ENCODE measurements at regions of chr2 and their contacts with region 1.

Region 1: GRCh38 chr2:219689676-219690628 is 62.5 kb downstream of the SLC4A3 start:
- DNase-seq: peak in 1 of 2 donors; percentile 30
- H3K4me3 ChIP-seq: peak overlapping the region in 1 of 2 donors; percentile 18
- H3K27ac ChIP-seq: peak overlapping the region; percentile 68 to 86
- H3K4me1 ChIP-seq: peaks cover 0 to 38% (median 25%) of the 10 kb centered on the region in 4 donors
- H3K27me3 ChIP-seq: no peaks in the 10 kb centered on the region
- CTCF ChIP-seq: peak; percentile 71 to 73

Region 2: DNA sequence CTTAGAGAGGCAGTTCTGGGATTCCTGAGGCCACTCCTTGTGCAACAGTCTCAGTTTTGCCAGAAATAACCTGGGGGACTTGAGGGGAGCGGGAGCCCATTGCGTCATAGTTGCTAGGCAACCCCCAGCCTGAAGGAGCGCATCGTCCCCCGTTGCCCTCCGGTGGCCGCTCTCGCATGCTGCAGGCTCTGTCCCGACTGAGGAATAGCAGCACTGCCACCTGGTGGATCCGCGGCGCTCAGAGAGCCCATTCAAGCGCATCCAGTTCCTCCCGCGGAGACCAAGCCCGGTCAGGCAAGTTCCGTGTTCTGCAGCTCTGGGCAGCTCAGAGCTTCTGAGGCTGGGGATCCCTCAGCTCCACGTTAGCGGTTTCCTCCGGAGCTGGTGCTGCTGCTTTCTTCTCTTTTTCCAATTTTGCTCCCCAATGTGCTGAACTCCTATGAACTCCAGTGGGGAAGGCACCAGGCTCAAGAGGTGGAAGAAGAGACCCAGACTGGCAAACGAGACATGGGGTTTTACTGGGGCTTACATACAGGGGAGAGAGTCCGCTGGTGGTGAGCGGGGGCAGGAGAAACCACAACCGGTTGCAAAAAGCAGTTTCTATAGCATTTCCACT is 47.4 kb before region 1 on chr2:
- intact Hi-C with region 1: loop called (anchors 5 kb)
- DNase-seq: peak; percentile 98
- H3K4me3 ChIP-seq: no peak overlapping the region
- H3K27ac ChIP-seq: no peak overlapping the region
- H3K4me1 ChIP-seq: peaks cover 0 to 23% (median 15%) of the 10 kb centered on the region in 4 donors
- H3K27me3 ChIP-seq: no peaks in the 10 kb centered on the region
- CTCF ChIP-seq: peak; percentile 99 to 100

Region 3: DNA sequence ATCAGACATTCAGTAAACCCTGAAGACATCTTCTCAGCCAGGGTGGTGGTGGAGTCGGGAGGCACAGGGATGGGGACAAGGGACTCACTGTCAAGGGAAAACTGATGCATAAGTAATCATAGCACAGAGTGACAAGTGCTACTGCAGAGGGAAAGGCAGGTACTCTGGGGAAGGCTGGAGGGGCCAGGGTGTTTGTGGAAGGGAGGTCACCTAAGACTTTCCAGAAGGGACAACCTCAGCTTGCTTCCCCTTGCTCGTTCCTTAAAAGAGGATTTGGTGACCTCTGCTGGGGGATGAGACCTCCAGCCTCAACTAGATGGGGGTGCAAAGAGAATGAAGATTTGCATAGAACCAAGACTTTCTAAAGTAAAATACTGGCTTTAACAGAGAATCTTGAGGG is 37.0 kb after region 1 on chr2:
- intact Hi-C with region 1: no loop called
- DNase-seq: no peak
- H3K4me3 ChIP-seq: no peak overlapping the region
- H3K27ac ChIP-seq: no peak overlapping the region
- H3K4me1 ChIP-seq: no peaks in the 10 kb centered on the region
- H3K27me3 ChIP-seq: peaks cover 0 to 2% of the 10 kb centered on the region in 2 donors
- CTCF ChIP-seq: no peak

Region 4: GRCh38 chr2:220147161-220148038 is 457.4 kb after region 1 on chr2:
- intact Hi-C with region 1: no loop called
- DNase-seq: no peak
- H3K4me3 ChIP-seq: no peak overlapping the region
- H3K27ac ChIP-seq: no peak overlapping the region
- H3K4me1 ChIP-seq: peaks cover 0 to 12% (median 6%) of the 10 kb centered on the region in 4 donors
- H3K27me3 ChIP-seq: no peaks in the 10 kb centered on the region
- CTCF ChIP-seq: no peak